ENCODE measurements at regions of chr16 and their contacts with region 1.

Region 1: DNA sequence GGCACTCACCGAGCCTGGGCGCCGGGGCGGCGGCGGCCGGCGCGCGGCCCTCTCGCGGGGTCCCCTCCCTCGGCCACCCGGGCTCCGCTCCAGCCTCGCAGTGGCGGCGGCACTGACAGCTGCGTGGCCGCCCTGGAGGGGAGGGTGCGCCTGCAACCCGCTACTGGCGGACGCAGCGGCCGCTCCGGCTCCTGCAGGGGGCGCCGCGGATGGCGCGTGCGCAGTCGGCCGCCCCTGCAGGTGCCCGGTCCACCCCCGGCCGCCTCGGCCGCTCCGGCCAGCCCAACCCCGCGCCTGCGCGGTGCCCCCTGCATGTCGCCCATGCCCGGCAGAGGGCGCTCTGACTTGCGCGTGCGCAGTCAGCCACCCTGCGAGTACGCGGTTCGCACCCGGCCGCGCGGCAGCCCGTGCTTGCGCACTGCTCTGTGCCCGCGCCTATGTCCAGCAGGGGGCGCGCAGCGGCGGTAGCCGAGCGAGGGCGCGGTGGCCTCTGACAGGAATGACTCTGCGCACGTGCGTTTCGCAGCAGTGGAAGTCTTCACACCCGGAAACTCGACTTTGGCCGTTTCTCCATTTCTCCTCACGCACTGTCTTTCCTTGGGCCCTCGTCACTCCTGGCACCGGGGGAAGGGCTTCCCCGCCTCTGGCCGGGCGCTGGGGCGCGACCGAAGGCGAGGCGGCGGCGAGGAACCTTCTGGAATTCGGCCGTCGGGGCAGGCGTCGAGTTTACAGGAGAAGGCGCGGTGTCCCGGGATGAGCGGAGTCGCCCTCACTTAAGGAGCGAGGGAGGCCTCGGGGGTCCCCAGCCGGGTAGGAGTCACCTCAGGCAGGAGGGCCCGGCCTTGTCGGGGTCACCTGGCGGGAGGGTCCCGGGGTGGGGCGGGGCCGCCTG is at the start of gene ABCA3:
- ATAC-seq: peak; percentile 81 to 92 (median 86)
- H3K4me3 ChIP-seq: peak within 1 kb of the TSS; percentile 54 to 69 (median 57)
- H3K27ac ChIP-seq: peak within 1 kb of the TSS; percentile 77 to 89
- H3K4me1 ChIP-seq: peaks cover 12 to 15% of the 10 kb centered on the region in 2 donors
- total RNA-seq, gene ABCA3: 2.1 to 41.4 (median 23.3) TPM

Region 2: DNA sequence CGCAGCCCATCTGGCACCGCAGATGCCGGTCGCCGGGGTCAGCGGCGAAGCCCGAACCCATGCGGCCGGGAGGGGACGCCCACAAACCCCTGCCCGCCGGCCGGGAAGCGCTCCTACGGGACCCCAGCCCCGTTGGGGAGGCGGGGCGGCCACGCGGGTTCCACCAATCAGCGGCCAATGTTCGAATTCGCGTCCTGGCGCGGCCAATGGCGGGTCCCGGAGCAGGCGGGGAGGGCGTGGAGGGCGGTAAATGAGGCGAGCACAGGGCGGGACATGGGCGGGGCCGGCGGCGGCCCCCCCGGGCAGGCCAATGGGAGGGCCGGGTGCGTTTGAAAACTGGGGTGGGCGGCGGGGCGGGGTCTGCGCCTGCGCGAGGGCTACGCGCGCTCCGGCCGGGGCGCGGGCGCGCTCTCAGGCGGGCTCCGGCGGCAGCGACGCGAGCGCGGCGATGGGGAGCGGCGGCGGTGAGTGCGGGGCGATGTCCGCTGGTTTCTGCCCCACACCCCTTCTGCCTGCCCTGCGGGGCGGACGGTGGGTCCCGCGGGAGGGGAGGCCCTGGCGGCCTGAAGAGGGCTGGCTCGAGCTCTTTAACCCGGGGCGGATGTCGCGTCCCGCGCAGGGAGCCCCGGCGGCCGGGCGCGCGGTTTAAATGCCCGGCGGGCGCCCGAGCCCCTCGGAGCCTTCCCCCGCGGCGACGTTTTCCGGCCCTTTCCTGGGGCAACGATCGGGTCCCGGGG is 88.4 kb after region 1 on chr16 and contains the start of gene CCNF:
- in situ Hi-C with region 1: loop called in 1 of 9 experiments (anchors 25 kb)
- ATAC-seq: peak; percentile 84 to 94 (median 91)
- H3K4me3 ChIP-seq: peak within 1 kb of the TSS; percentile 61 to 90 (median 68)
- H3K27ac ChIP-seq: peak within 1 kb of the TSS; percentile 17 to 72
- H3K4me1 ChIP-seq: peaks cover 9 to 12% of the 10 kb centered on the region in 2 donors
- total RNA-seq, gene CCNF: 1.7 to 32.2 (median 6.8) TPM

Region 3: GRCh38 chr16:2474877-2475412 is 134.1 kb after region 1 on chr16 and contains the start of gene TBC1D24:
- in situ Hi-C with region 1: loop called in 1 of 9 experiments (anchors 25 kb)
- ATAC-seq: peak; percentile 49 to 78 (median 54)
- H3K4me3 ChIP-seq: peak within 1 kb of the TSS; percentile 66 to 93 (median 77)
- H3K27ac ChIP-seq: peak within 1 kb of the TSS; percentile 71 to 78
- H3K4me1 ChIP-seq: peaks cover 43 to 46% of the 10 kb centered on the region in 2 donors
- total RNA-seq, gene TBC1D24: 12.3 to 23.5 (median 14.7) TPM